ENCODE measurements at regions of chr6 and their contacts with region 1.

Region 1: GRCh38 chr6:31729515-31729978 is 448 bp upstream of the DDAH2 start:
- DNase-seq: peak; percentile 60 to 89 (median 83)
- ATAC-seq: peak; percentile 69
- H3K4me3 ChIP-seq: peak overlapping the region; percentile 79 to 96
- H3K4me3 Mint-ChIP-seq: peak overlapping the region; percentile 97
- H3K27ac ChIP-seq: peak overlapping the region; percentile 11 to 58
- H3K27ac Mint-ChIP-seq: peak overlapping the region; percentile 89
- H3K4me1 ChIP-seq: peaks cover 35% of the 10 kb centered on the region
- H3K4me1 Mint-ChIP-seq: peaks cover 57% of the 10 kb centered on the region
- H3K27me3 ChIP-seq: no peaks in the 10 kb centered on the region
- H3K27me3 Mint-ChIP-seq: no peaks in the 10 kb centered on the region
- CTCF ChIP-seq: peak; percentile 91

Region 2: GRCh38 chr6:31351401-31352309 is 377.9 kb before region 1 on chr6:
- CTCF ChIA-PET with region 1: no interaction called
- POLR2A ChIA-PET with region 1: no interaction called
- intact Hi-C with region 1: no loop called
- DNase-seq: peak in 5 of 9 experiments; percentile 33 to 84 (median 50)
- ATAC-seq: peak; percentile 44
- H3K4me3 ChIP-seq: no peak overlapping the region
- H3K4me3 Mint-ChIP-seq: peak overlapping the region; percentile 100
- H3K27ac ChIP-seq: peak overlapping the region; percentile 41 to 42
- H3K27ac Mint-ChIP-seq: peak overlapping the region; percentile 81
- H3K4me1 ChIP-seq: peaks cover 40% of the 10 kb centered on the region
- H3K4me1 Mint-ChIP-seq: peaks cover 56% of the 10 kb centered on the region
- H3K27me3 ChIP-seq: no peaks in the 10 kb centered on the region
- H3K27me3 Mint-ChIP-seq: no peaks in the 10 kb centered on the region
- CTCF ChIP-seq: no peak

Region 3: GRCh38 chr6:31713991-31714684 is 15.4 kb before region 1 on chr6:
- CTCF ChIA-PET with region 1: interaction called, 11 read pairs
- POLR2A ChIA-PET with region 1: no interaction called
- intact Hi-C with region 1: no loop called
- DNase-seq: no peak
- ATAC-seq: no peak
- H3K4me3 ChIP-seq: no peak overlapping the region
- H3K4me3 Mint-ChIP-seq: no peak overlapping the region
- H3K27ac ChIP-seq: no peak overlapping the region
- H3K27ac Mint-ChIP-seq: peak overlapping the region; percentile 6
- H3K4me1 ChIP-seq: peaks cover 17% of the 10 kb centered on the region
- H3K4me1 Mint-ChIP-seq: peaks cover 23% of the 10 kb centered on the region
- H3K27me3 ChIP-seq: no peaks in the 10 kb centered on the region
- H3K27me3 Mint-ChIP-seq: no peaks in the 10 kb centered on the region
- CTCF ChIP-seq: no peak

Region 4: GRCh38 chr6:31795616-31796298 is 66.2 kb after region 1 on chr6 and contains the start of gene VARS1:
- CTCF ChIA-PET with region 1: interaction called, 15 read pairs
- POLR2A ChIA-PET with region 1: interaction called, 6 read pairs
- intact Hi-C with region 1: loop called (anchors 1 kb)
- DNase-seq: peak; percentile 68 to 93 (median 83)
- ATAC-seq: peak; percentile 88
- H3K4me3 ChIP-seq: peak within 1 kb of the TSS; percentile 63 to 93
- H3K4me3 Mint-ChIP-seq: peak within 1 kb of the TSS; percentile 94
- H3K27ac ChIP-seq: peak within 1 kb of the TSS; percentile 74 to 83
- H3K27ac Mint-ChIP-seq: peak within 1 kb of the TSS; percentile 98
- H3K4me1 ChIP-seq: peaks cover 44% of the 10 kb centered on the region
- H3K4me1 Mint-ChIP-seq: peaks cover 44% of the 10 kb centered on the region
- H3K27me3 ChIP-seq: no peaks in the 10 kb centered on the region
- H3K27me3 Mint-ChIP-seq: no peaks in the 10 kb centered on the region
- CTCF ChIP-seq: peak; percentile 70
- total RNA-seq, gene VARS1: 29.8 to 33.3 TPM

Region 5: DNA sequence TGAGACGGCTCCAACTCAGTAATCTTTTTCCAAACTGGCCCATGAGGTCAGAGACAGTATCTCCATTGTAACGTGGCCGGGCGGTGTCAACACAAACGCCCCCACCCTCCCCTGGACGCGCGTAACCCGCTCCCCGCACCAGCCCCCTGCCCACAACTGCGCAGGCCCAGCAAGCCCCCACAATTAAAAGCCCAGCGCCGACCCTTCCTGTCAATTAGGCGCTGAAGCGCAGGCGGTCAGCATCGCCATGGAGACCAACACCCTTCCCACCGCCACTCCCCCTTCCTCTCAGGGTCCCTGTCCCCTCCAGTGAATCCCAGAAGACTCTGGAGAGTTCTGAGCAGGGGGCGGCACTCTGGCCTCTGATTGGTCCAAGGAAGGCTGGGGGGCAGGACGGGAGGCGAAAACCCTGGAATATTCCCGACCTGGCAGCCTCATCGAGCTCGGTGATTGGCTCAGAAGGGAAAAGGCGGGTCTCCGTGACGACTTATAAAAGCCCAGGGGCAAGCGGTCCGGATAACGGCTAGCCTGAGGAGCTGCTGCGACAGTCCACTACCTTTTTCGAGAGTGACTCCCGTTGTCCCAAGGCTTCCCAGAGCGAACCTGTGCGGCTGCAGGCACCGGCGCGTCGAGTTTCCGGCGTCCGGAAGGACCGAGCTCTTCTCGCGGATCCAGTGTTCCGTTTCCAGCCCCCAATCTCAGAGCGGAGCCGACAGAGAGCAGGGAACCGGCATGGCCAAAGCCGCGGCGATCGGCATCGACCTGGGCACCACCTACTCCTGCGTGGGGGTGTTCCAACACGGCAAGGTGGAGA is 85.7 kb after region 1 on chr6 and contains the starts of genes HSPA1A and HSPA1L:
- CTCF ChIA-PET with region 1: interaction called, 16 read pairs
- POLR2A ChIA-PET with region 1: interaction called, 8 read pairs
- intact Hi-C with region 1: loop called in 1 of 2 experiments (anchors 2 kb)
- DNase-seq: peak in 7 of 9 experiments; percentile 41 to 75 (median 63)
- ATAC-seq: peak; percentile 13
- H3K4me3 ChIP-seq: peak within 1 kb of the TSS; percentile 74 to 96
- H3K4me3 Mint-ChIP-seq: peak within 1 kb of the TSS; percentile 93
- H3K27ac ChIP-seq: peak within 1 kb of the TSS; percentile 58 to 82
- H3K27ac Mint-ChIP-seq: peak within 1 kb of the TSS; percentile 83
- H3K4me1 ChIP-seq: peaks cover 16% of the 10 kb centered on the region
- H3K4me1 Mint-ChIP-seq: peaks cover 36% of the 10 kb centered on the region
- H3K27me3 ChIP-seq: no peaks in the 10 kb centered on the region
- H3K27me3 Mint-ChIP-seq: no peaks in the 10 kb centered on the region
- CTCF ChIP-seq: no peak
- total RNA-seq, gene HSPA1A: 2.1 to 2.2 TPM
- total RNA-seq, gene HSPA1L: 1.2 TPM

Region 6: DNA sequence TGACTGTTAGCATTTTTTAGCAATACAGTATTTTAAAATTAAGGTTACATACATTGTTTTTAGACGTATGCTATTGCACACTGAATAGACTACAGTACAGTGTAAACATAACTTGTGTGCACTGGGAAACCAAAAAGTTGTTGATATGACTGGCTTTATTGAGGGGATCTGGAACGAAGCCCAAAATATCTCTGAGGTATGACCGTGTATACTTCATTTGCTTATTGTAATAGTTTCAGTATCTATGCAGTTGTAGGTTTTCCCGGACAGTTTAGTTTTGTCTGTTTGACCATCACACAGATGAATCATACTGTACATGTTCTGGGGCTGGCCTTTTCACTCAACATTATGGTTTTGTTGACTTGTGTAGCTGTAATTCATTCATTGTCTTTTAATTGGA is 179.2 kb after region 1 on chr6:
- CTCF ChIA-PET with region 1: no interaction called
- POLR2A ChIA-PET with region 1: no interaction called
- intact Hi-C with region 1: no loop called
- DNase-seq: no peak
- ATAC-seq: no peak
- H3K4me3 ChIP-seq: no peak overlapping the region
- H3K4me3 Mint-ChIP-seq: no peak overlapping the region
- H3K27ac ChIP-seq: no peak overlapping the region
- H3K27ac Mint-ChIP-seq: no peak overlapping the region
- H3K4me1 ChIP-seq: no peaks in the 10 kb centered on the region
- H3K4me1 Mint-ChIP-seq: no peaks in the 10 kb centered on the region
- H3K27me3 ChIP-seq: no peaks in the 10 kb centered on the region
- H3K27me3 Mint-ChIP-seq: peaks cover 11% of the 10 kb centered on the region
- CTCF ChIP-seq: no peak